ENCODE measurements at regions of chr1 and their contacts with region 1.

Region 1: GRCh38 chr1:91165033-91165654 is 143.3 kb upstream of the ZNF644 start:
- DNase-seq: peak; percentile 68 to 97
- H3K4me3 ChIP-seq: no peak overlapping the region
- H3K27ac ChIP-seq: no peak overlapping the region
- H3K4me1 ChIP-seq: peaks cover 0 to 10% (median 3%) of the 10 kb centered on the region in 4 experiments; a peak in 4 of 7 replicates
- H3K27me3 ChIP-seq: peaks cover 0 to 4% (median 0%) of the 10 kb centered on the region in 4 experiments; a peak in 3 of 7 replicates
- CTCF ChIP-seq: peak; percentile 93 to 99 (median 99)
- EP300 ChIP-seq: no peak
- POLR2A ChIP-seq: no peak
- RAD21 ChIP-seq: peak; percentile 95 to 98

Region 2: GRCh38 chr1:90729504-90730242 is 435.5 kb before region 1 on chr1:
- CTCF ChIA-PET with region 1: interaction called, 42 read pairs
- POLR2A ChIA-PET with region 1: no interaction called
- DNase-seq: peak in 1 of 2 experiments; percentile 92
- H3K4me3 ChIP-seq: peak overlapping the region in 3 of 4 experiments; percentile 36 to 55 (median 37); a peak in 5 of 8 replicates
- H3K27ac ChIP-seq: no peak overlapping the region
- H3K4me1 ChIP-seq: peaks cover 14 to 41% (median 27%) of the 10 kb centered on the region in 4 experiments
- H3K27me3 ChIP-seq: peaks cover 64 to 94% (median 86%) of the 10 kb centered on the region in 4 experiments
- CTCF ChIP-seq: peak; percentile 80 to 88 (median 82)
- EP300 ChIP-seq: no peak
- POLR2A ChIP-seq: no peak
- RAD21 ChIP-seq: peak; percentile 80 to 89

Region 3: DNA sequence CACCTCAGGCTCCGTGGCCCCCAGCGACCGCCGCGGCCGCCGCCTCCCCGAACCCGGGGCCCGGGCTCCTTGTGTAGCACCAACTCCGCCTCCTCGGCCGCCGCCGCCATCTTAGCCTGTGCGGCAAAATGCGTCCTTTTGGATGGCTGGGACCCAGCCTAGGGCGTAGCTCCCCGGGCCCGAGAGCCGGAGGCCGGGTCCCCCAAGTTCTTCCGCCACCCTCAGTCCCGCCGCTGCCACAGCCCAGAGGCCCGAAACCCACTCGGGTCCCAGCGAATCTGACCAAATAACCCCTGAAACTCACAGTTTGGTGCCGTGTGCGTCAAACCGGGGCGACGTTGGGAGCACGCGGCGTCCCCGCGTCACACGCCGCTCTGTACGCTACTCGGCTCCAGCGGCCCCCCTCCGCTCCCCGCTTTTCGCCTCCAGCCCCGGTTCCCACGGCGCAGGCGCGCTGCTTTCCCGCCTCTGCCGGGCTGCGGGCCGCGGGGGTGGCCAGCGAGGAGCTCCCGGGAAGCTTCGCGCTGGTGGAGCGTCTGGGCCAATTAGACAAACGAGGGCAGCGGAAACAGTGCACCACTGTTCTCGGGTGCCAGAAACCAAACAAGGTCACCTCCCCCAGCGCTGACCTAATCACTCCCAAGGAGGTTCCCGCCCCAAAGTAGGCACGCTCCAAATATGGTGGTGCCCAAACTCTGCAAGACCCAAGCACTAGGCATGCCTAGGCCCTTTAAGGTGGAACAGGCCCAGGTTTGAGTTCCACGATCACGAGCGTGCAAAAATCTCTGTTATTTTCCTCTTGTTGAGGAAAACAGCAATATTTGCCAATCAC is 143.2 kb before region 1 on chr1 and contains the start of gene ZNF644:
- CTCF ChIA-PET with region 1: interaction called, 22 read pairs
- POLR2A ChIA-PET with region 1: interaction called, 16 read pairs
- DNase-seq: peak; percentile 73 to 87
- H3K4me3 ChIP-seq: peak within 1 kb of the TSS; percentile 85 to 91 (median 90)
- H3K27ac ChIP-seq: peak within 1 kb of the TSS; percentile 100
- H3K4me1 ChIP-seq: peaks cover 0 to 6% (median 2%) of the 10 kb centered on the region in 4 experiments; a peak in 4 of 7 replicates
- H3K27me3 ChIP-seq: no peaks in the 10 kb centered on the region
- CTCF ChIP-seq: no peak
- EP300 ChIP-seq: no peak
- POLR2A ChIP-seq: peak; percentile 83 to 95
- RAD21 ChIP-seq: no peak
- total RNA-seq, gene ZNF644: 85.2 and 93.5 TPM in 2 replicates

Region 4: GRCh38 chr1:91148641-91149069 is 16.5 kb before region 1 on chr1:
- CTCF ChIA-PET with region 1: interaction called, 20 read pairs
- POLR2A ChIA-PET with region 1: no interaction called
- DNase-seq: no peak
- H3K4me3 ChIP-seq: no peak overlapping the region
- H3K27ac ChIP-seq: no peak overlapping the region
- H3K4me1 ChIP-seq: peaks cover 2 to 4% (median 3%) of the 10 kb centered on the region in 4 experiments; a peak in 3 of 7 replicates
- H3K27me3 ChIP-seq: no peaks in the 10 kb centered on the region
- CTCF ChIP-seq: peak; percentile 8 to 37 (median 16); a peak in 3 of 4 replicates
- EP300 ChIP-seq: no peak
- POLR2A ChIP-seq: no peak
- RAD21 ChIP-seq: peak in 1 of 2 experiments; percentile 31; a peak in 2 of 4 replicates

Region 5: DNA sequence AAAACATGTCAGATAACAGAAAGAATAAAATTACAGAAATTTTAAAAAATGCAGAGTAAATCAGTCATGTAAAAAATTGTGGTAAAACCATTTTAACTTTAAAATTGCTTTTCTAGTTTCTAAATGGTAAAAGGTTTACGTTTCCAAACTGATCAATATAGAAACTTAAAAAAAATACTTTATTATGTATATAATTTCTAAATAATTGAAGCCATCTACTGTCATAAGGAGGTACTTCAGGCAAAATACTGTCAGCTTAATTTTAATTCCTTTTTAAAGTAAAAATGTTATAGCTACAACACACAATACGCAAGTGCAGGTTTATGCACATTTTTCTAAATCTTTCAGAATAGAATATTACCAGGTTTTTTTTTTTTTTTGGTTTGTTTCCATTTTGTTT is 79.6 kb after region 1 on chr1:
- CTCF ChIA-PET with region 1: interaction called, 17 read pairs
- POLR2A ChIA-PET with region 1: no interaction called
- DNase-seq: no peak
- H3K4me3 ChIP-seq: no peak overlapping the region
- H3K27ac ChIP-seq: no peak overlapping the region
- H3K4me1 ChIP-seq: no peaks in the 10 kb centered on the region
- H3K27me3 ChIP-seq: no peaks in the 10 kb centered on the region
- CTCF ChIP-seq: no peak
- EP300 ChIP-seq: no peak
- POLR2A ChIP-seq: no peak
- RAD21 ChIP-seq: no peak

Region 6: GRCh38 chr1:91500756-91501522 is 335.8 kb after region 1 on chr1 and contains the start of gene CDC7:
- CTCF ChIA-PET with region 1: interaction called, 11 read pairs
- POLR2A ChIA-PET with region 1: no interaction called
- DNase-seq: peak; percentile 79 to 94
- H3K4me3 ChIP-seq: peak within 1 kb of the TSS; percentile 67 to 82 (median 76)
- H3K27ac ChIP-seq: peak within 1 kb of the TSS; percentile 99
- H3K4me1 ChIP-seq: peaks cover 2 to 14% (median 7%) of the 10 kb centered on the region in 4 experiments; a peak in 6 of 7 replicates
- H3K27me3 ChIP-seq: no peaks in the 10 kb centered on the region
- CTCF ChIP-seq: peak; percentile 35 to 61 (median 57)
- EP300 ChIP-seq: 0 out of 3 replicates have a peak, but pooled peaks of 1 of the 2 experiments have one; percentile 40
- POLR2A ChIP-seq: peak; percentile 90 to 95
- RAD21 ChIP-seq: peak in 1 of 2 experiments; percentile 54; a peak in 2 of 4 replicates
- total RNA-seq, gene CDC7: 34.4 and 36.4 TPM in 2 replicates